Gastrocnemius medialis (tissue), 4 donors: ENCODE measurements at regions of chr1 and their contacts with region 1.

Region 1: DNA sequence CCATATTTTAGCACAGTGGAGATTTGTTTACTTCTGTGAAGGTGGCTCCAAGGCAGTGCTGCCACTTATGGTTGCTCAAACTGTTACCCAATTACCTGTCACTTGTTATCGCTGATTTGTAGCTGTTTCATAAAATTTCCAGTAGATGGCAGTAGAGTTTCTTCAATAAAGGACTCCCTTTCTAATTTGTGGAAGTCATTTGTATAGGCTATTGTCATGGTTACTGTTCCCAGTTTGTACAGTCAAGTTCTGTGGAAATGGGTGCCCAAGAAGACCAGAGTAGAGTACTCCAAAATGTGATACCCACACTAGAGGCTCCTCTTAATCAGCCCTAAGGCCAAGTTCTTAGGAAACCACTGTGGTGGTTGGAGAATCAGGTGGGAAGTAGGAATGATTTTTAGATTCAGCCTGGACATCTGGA is 186.1 kb downstream of the CLEC20A start:
- DNase-seq: peak in 1 of 2 donors; percentile 23
- ATAC-seq: peak; percentile 96
- H3K4me3 ChIP-seq: no peak overlapping the region
- H3K27ac ChIP-seq: no peak overlapping the region
- H3K4me1 ChIP-seq: peaks cover 12 to 14% of the 10 kb centered on the region in 2 donors
- H3K27me3 ChIP-seq: no peaks in the 10 kb centered on the region
- CTCF ChIP-seq: peak; percentile 78 to 84 (median 82)
- POLR2A ChIP-seq: no peak

Region 2: GRCh38 chr1:177770096-177770495 is 540.6 kb before region 1 on chr1:
- in situ Hi-C with region 1: no loop called
- intact Hi-C with region 1: no loop called
- DNase-seq: no peak
- ATAC-seq: no peak
- H3K4me3 ChIP-seq: no peak overlapping the region
- H3K27ac ChIP-seq: no peak overlapping the region
- H3K4me1 ChIP-seq: no peaks in the 10 kb centered on the region
- H3K27me3 ChIP-seq: no peaks in the 10 kb centered on the region
- CTCF ChIP-seq: no peak
- POLR2A ChIP-seq: no peak

Region 3: DNA sequence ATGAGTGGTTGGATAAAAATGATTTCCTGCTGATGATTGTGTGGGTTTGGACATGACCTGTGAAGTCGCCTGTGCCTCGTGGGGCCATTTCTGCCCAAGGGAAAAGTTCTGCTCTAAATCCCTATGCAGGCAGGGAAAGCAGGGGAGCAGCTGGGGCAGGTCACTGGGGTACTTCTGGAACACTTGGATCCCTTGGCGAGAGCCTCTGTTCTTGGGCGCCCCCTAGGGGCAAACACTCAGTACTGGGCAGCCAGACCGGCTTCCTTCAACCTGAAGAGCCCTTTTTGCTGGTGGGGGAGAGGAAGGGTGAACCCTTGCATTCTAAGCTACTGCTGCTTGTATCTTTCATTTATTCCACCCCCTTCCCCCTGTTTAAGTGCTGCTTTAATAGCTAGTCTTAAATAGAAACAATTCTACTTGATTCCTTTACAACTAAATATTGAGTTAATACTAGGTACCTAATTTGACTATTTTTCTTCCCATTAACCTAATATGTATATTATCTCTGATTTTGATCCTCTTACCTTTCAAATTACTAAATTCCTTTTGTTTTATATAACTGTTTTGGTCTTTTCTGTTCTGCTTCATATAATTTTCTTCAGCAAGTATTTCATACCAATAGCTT is 191.1 kb after region 1 on chr1:
- in situ Hi-C with region 1: loop called in 3 of 4 experiments (anchors 10 to 25 kb)
- intact Hi-C with region 1: loop called (anchors 2 kb)
- DNase-seq: peak in 1 of 2 donors; percentile 31
- ATAC-seq: peak; percentile 54 to 90
- H3K4me3 ChIP-seq: no peak overlapping the region
- H3K27ac ChIP-seq: no peak overlapping the region
- H3K4me1 ChIP-seq: no peaks in the 10 kb centered on the region
- H3K27me3 ChIP-seq: no peaks in the 10 kb centered on the region
- CTCF ChIP-seq: peak; percentile 65 to 93 (median 78)
- POLR2A ChIP-seq: no peak